ENCODE measurements at regions of chr1 and their contacts with region 1.

Region 1: DNA sequence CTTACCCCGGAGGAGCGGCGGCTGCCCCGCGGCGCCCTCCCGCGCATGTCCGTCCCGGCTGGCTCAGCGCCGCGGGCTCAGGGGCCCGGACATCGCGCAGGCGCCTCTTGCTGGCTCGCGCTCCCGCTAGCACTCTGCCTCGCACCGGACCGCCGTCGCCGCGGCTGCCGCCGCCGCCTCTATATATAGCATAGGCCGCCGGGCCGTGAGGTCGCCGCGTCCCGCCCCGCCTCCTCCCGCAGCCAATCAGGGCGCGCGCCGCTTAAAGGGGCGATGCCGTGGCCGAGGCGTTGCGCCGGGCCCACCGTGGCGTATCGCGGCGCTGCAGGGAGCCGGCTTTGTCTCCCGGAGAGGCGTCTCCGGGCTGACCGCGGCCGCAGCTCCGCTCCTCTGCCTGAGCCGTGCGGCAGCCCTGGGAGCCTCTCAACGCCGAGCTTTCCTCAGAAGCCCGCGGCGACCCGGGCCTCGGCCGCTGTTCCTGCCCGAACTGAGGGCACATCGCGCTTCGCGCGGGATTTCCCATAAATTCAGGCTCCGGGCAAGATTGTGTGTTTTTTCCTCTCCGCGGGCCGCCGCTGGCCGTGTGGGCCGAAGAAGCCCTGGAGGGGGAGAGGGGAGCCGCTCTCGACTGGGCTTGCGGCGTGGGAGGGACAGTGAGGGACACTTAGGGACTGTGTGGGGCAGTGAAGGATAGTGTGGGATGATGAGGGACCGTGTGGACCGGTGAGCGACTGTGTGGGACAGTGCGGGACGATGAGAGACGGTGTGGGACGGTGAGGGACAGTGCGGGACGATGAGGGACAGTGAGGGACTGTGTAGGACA is at the start of gene ERRFI1:
- DNase-seq: peak; percentile 97
- ATAC-seq: peak; percentile 97
- total RNA-seq, gene ERRFI1: 12.8 TPM

Region 2: GRCh38 chr1:7912743-7913557 is 113.4 kb before region 1 on chr1:
- intact Hi-C with region 1: no loop called
- DNase-seq: no peak
- ATAC-seq: no peak

Region 3: DNA sequence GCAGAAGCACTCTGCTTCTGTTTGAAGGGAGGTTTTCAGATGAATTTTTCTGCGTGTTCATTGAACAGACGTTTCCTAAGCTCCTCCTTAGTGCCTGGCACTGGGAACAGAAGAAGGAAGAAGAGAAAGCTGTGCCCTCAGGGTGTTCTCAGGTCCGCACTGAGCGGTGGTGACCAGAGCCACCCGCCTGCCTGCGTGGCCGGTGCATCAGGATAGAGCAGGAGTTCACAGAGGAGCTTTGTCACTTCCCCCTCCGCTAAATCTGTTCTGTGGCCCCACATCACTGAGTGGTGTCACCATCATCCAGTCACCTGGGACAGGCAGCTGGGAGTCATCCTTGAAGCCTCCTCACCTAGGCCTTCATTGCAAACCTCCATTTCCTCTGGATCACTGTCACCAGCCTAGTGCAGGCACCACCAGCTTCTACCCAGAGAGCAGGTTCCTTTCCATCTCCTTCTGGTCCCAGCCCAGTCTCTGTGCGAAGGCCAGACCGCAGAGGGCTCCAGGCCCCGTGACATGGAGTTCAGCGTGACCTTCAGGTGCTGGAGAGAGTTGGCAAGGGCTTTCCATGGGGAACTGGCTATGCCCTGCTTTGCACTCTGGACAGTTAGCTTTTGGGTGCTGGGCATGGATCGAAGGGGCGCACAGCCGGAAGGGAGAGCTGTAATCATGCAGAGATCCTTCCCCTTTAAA is 43.1 kb before region 1 on chr1:
- intact Hi-C with region 1: loop called (anchors 2 kb)
- DNase-seq: no peak
- ATAC-seq: peak; percentile 62

Region 4: GRCh38 chr1:8217011-8217711 is 190.8 kb after region 1 on chr1:
- intact Hi-C with region 1: loop called (anchors 5 kb)
- DNase-seq: peak; percentile 72
- ATAC-seq: peak; percentile 87

Region 5: GRCh38 chr1:8238851-8239305 is 212.5 kb after region 1 on chr1:
- intact Hi-C with region 1: loop called (anchors 5 kb)
- DNase-seq: no peak
- ATAC-seq: peak; percentile 88

Region 6: GRCh38 chr1:8314346-8315280 is 288.2 kb after region 1 on chr1:
- intact Hi-C with region 1: loop called (anchors 1 kb)
- DNase-seq: peak; percentile 79
- ATAC-seq: peak; percentile 68